Psoas muscle (tissue), 8 donors: ENCODE measurements at regions of chr5 and their contacts with region 1.

Region 1: GRCh38 chr5:134101686-134102439 is 12.6 kb upstream of the TCF7 start:
- DNase-seq: peak; percentile 68 to 84
- ATAC-seq: peak; percentile 85 to 97 (median 88)
- H3K4me3 ChIP-seq: no peak overlapping the region
- H3K27ac ChIP-seq: no peak overlapping the region
- H3K4me1 ChIP-seq: no peaks in the 10 kb centered on the region
- H3K27me3 ChIP-seq: no peaks in the 10 kb centered on the region
- CTCF ChIP-seq: peak; percentile 87

Region 2: GRCh38 chr5:134043793-134044792 is 57.8 kb before region 1 on chr5:
- intact Hi-C with region 1: loop called in 1 of 2 experiments (anchors 2 kb)
- DNase-seq: no peak
- ATAC-seq: no peak
- H3K4me3 ChIP-seq: no peak overlapping the region
- H3K27ac ChIP-seq: no peak overlapping the region
- H3K4me1 ChIP-seq: no peaks in the 10 kb centered on the region
- H3K27me3 ChIP-seq: no peaks in the 10 kb centered on the region
- CTCF ChIP-seq: no peak